Cardiac septum (tissue), 1 donor: ENCODE measurements at regions of chr13 and their contacts with region 1.

Region 1: GRCh38 chr13:36736119-36736726 is 62.4 kb downstream of the SERTM1 start:
- DNase-seq: no peak

Region 2: GRCh38 chr13:36420437-36420891 is 315.8 kb before region 1 on chr13:
- intact Hi-C with region 1: loop called (anchors 5 kb)
- DNase-seq: no peak

Region 3: GRCh38 chr13:36453516-36453915 is 282.7 kb before region 1 on chr13:
- intact Hi-C with region 1: loop called (anchors 2 kb)
- DNase-seq: no peak

Region 4: GRCh38 chr13:36700170-36700569 is 36.1 kb before region 1 on chr13:
- intact Hi-C with region 1: no loop called
- DNase-seq: no peak

Region 5: GRCh38 chr13:36981156-36981743 is 245.0 kb after region 1 on chr13:
- intact Hi-C with region 1: no loop called
- DNase-seq: no peak